H1 (cell line): ENCODE measurements at regions of chr9 and their contacts with region 1.

Region 1: DNA sequence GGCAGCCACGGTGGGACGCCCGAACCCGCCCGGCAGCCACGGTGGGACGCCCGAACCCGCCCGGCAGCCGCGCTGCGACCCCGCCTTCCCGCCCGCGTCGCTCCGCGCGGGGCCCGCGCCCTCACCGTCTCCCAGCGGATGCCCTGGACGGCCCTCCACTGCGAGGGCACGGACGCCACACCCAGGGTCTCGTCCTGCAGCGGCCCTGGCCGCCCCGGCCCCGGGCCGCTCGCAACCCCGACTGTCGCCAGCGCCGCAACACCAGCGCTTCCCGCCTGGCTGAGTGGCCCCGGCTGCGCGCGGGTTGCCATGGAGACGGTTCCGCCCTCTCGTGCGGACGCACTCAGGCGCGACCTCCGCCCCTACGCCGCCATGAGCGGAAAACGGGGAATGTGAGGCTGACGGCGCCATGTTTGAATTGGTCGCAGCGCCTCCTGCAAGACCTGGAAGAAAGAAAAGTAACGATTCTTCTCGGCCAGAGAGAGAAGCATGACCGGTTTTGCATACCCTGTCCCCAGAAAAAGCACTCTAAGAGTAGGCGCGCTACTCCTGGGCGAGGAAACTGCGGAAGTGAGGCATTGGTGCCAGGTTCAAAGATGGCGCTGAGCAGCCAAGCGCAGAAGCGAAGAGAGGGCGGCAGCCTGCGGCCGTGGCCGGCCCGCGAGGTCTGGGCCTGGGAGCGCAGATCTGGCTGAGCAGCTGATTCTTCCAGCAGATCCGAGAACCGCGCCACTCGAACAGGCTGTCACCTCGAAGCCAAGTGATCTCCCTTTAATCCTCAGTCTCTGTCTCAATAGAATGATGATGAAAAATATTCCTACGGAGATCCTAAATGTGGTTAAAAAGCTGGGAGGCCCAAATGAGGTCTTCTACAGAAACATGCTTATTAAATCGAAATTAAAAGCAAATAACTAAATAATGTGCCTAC is at the start of gene DYNC2I2:
- DNase-seq: peak; percentile 84 to 97
- H3K4me3 ChIP-seq: peak within 1 kb of the TSS; percentile 66 to 86 (median 68)
- H3K27ac ChIP-seq: peak within 1 kb of the TSS; percentile 100
- H3K4me1 ChIP-seq: no peaks in the 10 kb centered on the region; a peak in 2 of 7 replicates
- H3K27me3 ChIP-seq: no peaks in the 10 kb centered on the region
- CTCF ChIP-seq: no peak
- EP300 ChIP-seq: 0 out of 3 replicates have a peak, but pooled peaks of 1 of the 2 experiments have one; percentile 9
- POLR2A ChIP-seq: peak; percentile 82 to 87
- RAD21 ChIP-seq: peak in 1 of 2 experiments; percentile 17; a peak in 1 of 4 replicates
- total RNA-seq, gene DYNC2I2: 58.0 and 60.4 TPM in 2 replicates

Region 2: GRCh38 chr9:128479262-128479661 is 177.4 kb before region 1 on chr9:
- CTCF ChIA-PET with region 1: no interaction called
- POLR2A ChIA-PET with region 1: no interaction called
- DNase-seq: no peak
- H3K4me3 ChIP-seq: no peak overlapping the region
- H3K27ac ChIP-seq: no peak overlapping the region
- H3K4me1 ChIP-seq: no peaks in the 10 kb centered on the region
- H3K27me3 ChIP-seq: no peaks in the 10 kb centered on the region
- CTCF ChIP-seq: peak in 1 of 3 experiments; percentile 2; a peak in 1 of 4 replicates
- EP300 ChIP-seq: no peak
- POLR2A ChIP-seq: no peak
- RAD21 ChIP-seq: no peak

Region 3: DNA sequence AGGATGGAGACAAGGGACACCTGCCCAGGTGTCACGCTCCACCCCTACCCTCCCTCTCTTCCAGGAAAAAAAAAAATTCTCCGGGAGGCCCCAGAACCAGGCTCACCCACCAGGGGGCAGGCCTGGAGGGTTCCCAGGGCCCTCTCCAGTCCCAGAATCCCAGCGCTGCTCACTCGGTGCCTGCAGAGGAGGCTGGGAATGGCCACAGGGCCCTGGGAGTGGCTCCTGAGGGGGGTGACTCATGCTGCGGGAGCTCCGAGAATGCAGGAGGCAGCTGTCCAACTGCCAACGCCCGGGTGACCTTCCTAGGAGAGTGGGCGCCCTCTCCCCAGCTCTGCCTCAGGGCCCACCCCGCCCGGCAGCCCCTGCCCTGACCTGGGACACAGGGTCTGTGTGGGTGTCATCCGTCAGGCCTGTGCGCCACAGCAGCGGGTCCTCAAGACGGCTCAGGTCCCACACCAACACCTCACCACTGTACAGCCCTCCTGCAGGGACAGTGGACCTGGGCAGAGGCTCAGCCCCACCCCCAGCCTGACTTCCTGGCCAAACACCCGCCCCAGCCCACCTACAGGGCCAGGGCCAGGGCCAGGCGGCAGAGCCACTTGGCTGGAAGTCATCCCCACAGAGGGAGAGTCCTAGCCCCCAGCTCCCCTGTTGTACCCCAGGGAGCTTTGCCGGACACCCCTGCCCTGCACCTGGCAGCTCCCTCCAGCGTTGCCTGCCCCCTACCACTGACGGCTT is 21.2 kb before region 1 on chr9:
- CTCF ChIA-PET with region 1: interaction called, 4 read pairs
- POLR2A ChIA-PET with region 1: interaction called, 22 read pairs
- DNase-seq: peak; percentile 81 to 90
- H3K4me3 ChIP-seq: no peak overlapping the region
- H3K27ac ChIP-seq: peak overlapping the region; percentile 34; the same call in 1 of the 2 replicates
- H3K4me1 ChIP-seq: peaks cover 0 to 14% (median 11%) of the 10 kb centered on the region in 4 experiments; a peak in 5 of 7 replicates
- H3K27me3 ChIP-seq: no peaks in the 10 kb centered on the region
- CTCF ChIP-seq: peak in 2 of 3 experiments; percentile 59 to 68; a peak in 3 of 4 replicates
- EP300 ChIP-seq: no peak
- POLR2A ChIP-seq: no peak
- RAD21 ChIP-seq: peak; percentile 60 to 71

Region 4: GRCh38 chr9:128702445-128702948 is 45.8 kb after region 1 on chr9 and contains the start of gene PKN3:
- CTCF ChIA-PET with region 1: interaction called, 3 read pairs
- POLR2A ChIA-PET with region 1: interaction called, 1,197 read pairs
- DNase-seq: peak; percentile 61 to 99
- H3K4me3 ChIP-seq: peak within 1 kb of the TSS; percentile 51 to 75 (median 65)
- H3K27ac ChIP-seq: no peak within 1 kb of the TSS; the same call in 1 of the 2 replicates
- H3K4me1 ChIP-seq: peaks cover 0 to 4% (median 2%) of the 10 kb centered on the region in 4 experiments; a peak in 3 of 7 replicates
- H3K27me3 ChIP-seq: no peaks in the 10 kb centered on the region
- CTCF ChIP-seq: peak; percentile 72 to 87 (median 86)
- EP300 ChIP-seq: 0 out of 3 replicates have a peak, but pooled peaks of 1 of the 2 experiments have one; percentile 20
- POLR2A ChIP-seq: no peak; a peak in 1 of 3 replicates
- RAD21 ChIP-seq: peak; percentile 34 to 46; a peak in 3 of 4 replicates
- total RNA-seq, gene PKN3: 15.2 and 16.3 TPM in 2 replicates